H1 (cell line): ENCODE measurements at regions of chr19 and their contacts with region 1.

Region 1: GRCh38 chr19:12757544-12758274 is 6.1 kb downstream of the BEST2 start:
- DNase-seq: peak; percentile 83 to 95
- H3K4me3 ChIP-seq: peak overlapping the region; percentile 12 to 59 (median 27); a peak in 6 of 8 replicates
- H3K27ac ChIP-seq: no peak overlapping the region
- H3K4me1 ChIP-seq: peaks cover 0 to 6% (median 2%) of the 10 kb centered on the region in 4 experiments; a peak in 3 of 7 replicates
- H3K27me3 ChIP-seq: no peaks in the 10 kb centered on the region; a peak in 1 of 7 replicates
- CTCF ChIP-seq: peak; percentile 90 to 94 (median 91)
- EP300 ChIP-seq: no peak; a peak in 1 of 3 replicates
- POLR2A ChIP-seq: peak in 1 of 2 experiments; percentile 59; a peak in 1 of 3 replicates
- RAD21 ChIP-seq: peak; percentile 52 to 63

Region 2: DNA sequence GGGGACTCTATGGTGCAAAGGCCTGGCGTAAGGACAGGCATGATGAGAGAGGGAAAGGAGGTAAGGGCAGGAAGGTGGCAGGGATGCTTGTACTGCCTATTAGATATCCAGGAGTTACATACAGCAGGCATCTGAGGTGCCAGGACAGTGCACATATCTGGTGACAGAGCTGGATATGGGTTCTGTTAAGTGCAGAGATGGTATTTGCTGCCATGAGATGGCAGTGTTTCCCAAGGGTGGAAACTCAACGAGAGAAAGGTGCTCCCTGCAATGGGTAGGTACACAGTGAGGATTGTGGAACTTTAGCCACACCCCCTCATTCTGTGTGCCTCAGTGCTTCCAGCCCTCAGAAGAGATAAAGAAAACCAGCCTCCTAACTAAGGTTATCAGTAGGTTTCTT is 40.8 kb before region 1 on chr19:
- CTCF ChIA-PET with region 1: interaction called, 81 read pairs
- POLR2A ChIA-PET with region 1: interaction called, 50 read pairs
- DNase-seq: no peak
- H3K4me3 ChIP-seq: no peak overlapping the region
- H3K27ac ChIP-seq: no peak overlapping the region
- H3K4me1 ChIP-seq: peaks cover 0 to 6% (median 2%) of the 10 kb centered on the region in 4 experiments; a peak in 4 of 7 replicates
- H3K27me3 ChIP-seq: no peaks in the 10 kb centered on the region
- CTCF ChIP-seq: peak; percentile 19 to 65 (median 41); a peak in 3 of 4 replicates
- EP300 ChIP-seq: no peak
- POLR2A ChIP-seq: no peak
- RAD21 ChIP-seq: peak; percentile 60 to 68

Region 3: DNA sequence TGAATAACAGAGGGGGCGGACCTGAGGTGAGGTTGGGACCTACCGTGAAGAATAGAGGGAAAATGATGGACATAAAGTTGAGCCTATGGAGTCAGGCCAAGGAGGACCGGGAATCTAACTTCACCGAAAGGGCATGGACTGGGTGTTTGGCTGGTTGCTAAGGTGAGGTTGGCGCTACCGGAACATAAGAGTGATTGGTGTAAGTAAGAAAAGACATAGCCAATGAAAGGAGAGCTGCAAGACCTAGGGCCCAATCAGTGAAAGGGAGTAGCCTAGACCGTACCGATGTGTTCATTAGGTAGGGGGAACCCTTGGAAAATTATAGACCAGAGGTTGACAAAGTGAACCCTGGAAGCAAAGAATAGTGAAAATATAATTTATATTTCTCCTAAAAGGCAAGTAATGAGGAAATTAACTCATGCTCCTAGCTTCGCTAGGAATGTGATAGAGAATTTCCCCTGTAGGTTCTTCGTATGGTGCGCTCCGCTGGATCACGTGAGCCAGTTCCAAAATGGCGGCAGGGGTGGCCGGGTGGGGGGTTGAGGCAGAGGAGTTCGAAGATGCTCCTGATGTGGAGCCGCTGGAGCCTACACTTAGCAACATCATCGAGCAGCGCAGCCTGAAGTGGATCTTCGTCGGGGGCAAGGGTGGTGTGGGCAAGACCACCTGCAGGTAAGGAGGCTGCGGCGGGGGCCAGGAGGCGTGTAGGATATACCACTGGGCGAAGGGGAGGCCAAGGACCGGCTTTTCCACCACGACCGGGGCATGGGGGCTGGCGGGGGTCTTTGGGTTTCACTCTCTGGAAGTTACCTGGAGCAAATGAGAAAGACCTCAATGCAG is 20.5 kb before region 1 on chr19 and contains the start of gene GET3:
- CTCF ChIA-PET with region 1: interaction called, 87 read pairs
- POLR2A ChIA-PET with region 1: interaction called, 104 read pairs
- DNase-seq: peak; percentile 87 to 97
- H3K4me3 ChIP-seq: peak within 1 kb of the TSS; percentile 65 to 91 (median 83)
- H3K27ac ChIP-seq: peak within 1 kb of the TSS; percentile 98
- H3K4me1 ChIP-seq: peaks cover 3 to 13% (median 7%) of the 10 kb centered on the region in 4 experiments
- H3K27me3 ChIP-seq: no peaks in the 10 kb centered on the region
- CTCF ChIP-seq: no peak
- EP300 ChIP-seq: peak in 1 of 2 experiments; percentile 99; a peak in 2 of 3 replicates
- POLR2A ChIP-seq: peak; percentile 80 to 83
- RAD21 ChIP-seq: no peak
- total RNA-seq, gene GET3: 105 and 106 TPM in 2 replicates

Region 4: GRCh38 chr19:12789904-12790619 is 32.4 kb after region 1 on chr19:
- CTCF ChIA-PET with region 1: interaction called, 288 read pairs
- POLR2A ChIA-PET with region 1: interaction called, 12 read pairs
- DNase-seq: peak; percentile 87 to 97
- H3K4me3 ChIP-seq: peak overlapping the region; percentile 36 to 71 (median 52)
- H3K27ac ChIP-seq: no peak overlapping the region; the same call in 1 of the 2 replicates
- H3K4me1 ChIP-seq: peaks cover 7 to 32% (median 22%) of the 10 kb centered on the region in 4 experiments
- H3K27me3 ChIP-seq: peaks cover 0 to 18% (median 13%) of the 10 kb centered on the region in 4 experiments; a peak in 5 of 7 replicates
- CTCF ChIP-seq: no peak
- EP300 ChIP-seq: peak in 1 of 2 experiments; percentile 100; a peak in 2 of 3 replicates
- POLR2A ChIP-seq: no peak
- RAD21 ChIP-seq: no peak

Region 5: DNA sequence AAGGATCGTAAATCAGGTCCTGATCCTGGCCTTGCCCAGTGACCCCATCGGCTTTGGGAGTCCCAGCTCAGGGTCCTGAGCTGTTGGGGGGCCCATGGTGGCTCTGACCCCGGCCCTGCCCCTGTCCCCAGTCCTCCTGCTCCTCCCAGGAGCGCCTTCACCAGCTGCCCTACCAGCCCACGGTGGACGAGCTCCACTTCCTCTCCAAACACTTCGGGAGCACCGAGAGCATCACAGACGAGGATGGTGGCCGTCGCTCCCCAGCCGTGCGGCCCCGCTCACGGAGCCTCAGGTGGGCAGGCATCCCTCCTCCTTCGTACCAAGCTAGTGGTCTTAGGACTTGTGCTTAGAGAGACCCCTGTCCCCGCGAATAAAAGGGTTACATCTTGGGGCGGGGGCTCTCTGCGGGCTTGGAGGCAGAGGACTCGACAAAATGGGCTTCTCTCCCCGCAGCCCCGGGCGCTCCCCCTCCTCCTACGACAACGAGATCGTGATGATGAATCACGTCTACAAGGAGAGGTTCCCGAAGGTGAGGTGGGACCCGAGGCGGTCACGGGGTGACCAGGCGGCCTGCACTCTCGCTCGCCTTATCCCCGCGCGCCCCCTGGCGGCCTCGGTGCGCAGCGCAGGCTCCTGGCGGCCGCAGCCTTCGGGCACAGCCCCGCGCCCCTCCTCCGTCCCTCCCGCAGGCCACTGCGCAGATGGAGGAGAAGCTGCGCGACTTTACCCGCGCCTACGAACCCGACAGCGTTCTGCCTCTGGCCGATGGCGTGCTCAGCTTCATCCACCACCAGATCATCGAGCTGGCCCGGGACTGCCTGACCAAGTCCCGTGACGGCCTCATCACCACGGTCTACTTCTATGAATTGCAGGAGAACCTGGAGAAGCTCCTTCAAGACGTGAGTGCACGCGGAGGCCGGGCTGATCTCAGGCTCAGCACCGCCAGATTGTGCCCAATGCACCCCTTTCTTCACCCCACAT is 89.7 kb after region 1 on chr19:
- CTCF ChIA-PET with region 1: interaction called, 31 read pairs
- POLR2A ChIA-PET with region 1: interaction called, 17 read pairs
- DNase-seq: peak in 1 of 2 experiments; percentile 100
- H3K4me3 ChIP-seq: peak overlapping the region in 2 of 4 experiments; percentile 26 to 47; a peak in 4 of 8 replicates
- H3K27ac ChIP-seq: no peak overlapping the region
- H3K4me1 ChIP-seq: peaks cover 0 to 10% (median 3%) of the 10 kb centered on the region in 4 experiments; a peak in 5 of 7 replicates
- H3K27me3 ChIP-seq: no peaks in the 10 kb centered on the region
- CTCF ChIP-seq: peak; percentile 96 to 99 (median 99)
- EP300 ChIP-seq: no peak
- POLR2A ChIP-seq: no peak
- RAD21 ChIP-seq: peak; percentile 92 to 94